ENCODE measurements at regions of chr17 and their contacts with region 1.

Region 1: DNA sequence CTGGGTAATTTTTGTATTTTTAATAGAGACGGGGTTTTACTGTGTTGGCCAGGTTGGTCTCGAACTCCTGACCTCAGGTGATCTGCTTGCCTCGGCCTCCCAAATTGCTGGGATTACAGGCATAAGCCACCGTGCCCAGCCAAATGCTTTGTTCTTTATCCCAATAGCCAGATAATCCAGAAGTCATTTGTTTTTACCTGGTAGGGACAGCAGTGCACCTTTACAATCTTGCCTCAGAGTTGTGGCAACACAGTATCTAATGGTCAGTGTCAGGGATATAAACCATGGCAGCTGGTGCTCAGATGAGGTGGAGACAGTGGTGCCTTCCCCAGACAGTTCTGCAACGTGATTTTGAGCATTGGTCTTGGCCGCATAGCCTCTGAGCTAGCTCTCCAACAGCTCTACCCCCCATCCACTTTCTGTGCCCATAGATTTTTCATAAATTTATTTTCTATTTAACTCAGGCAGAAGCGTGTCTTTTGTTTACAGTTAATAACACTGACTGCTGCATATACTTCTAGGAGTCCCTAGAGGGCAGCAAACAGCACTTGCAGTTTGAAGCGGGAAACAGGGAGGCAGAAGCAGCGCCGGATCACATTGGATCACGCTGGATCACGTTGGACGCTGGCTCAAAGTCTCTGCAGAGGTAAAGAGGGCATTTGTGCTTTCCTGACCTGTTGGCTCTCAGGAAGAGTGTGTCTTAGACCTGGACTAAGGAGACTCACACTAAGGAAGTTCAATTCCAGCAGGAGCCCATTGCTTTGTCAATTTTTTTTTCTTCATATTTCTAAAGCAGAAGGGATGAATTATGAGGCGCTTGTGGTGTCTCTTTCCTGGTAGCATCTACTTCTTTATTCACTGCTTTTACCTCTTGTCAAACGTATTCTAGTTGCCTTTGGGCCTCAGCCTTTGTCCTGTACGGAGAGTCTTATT is 5.1 kb upstream of the GGT6 start:
- DNase-seq: peak; percentile 78
- ATAC-seq: peak; percentile 69
- H3K4me3 Mint-ChIP-seq: no peak overlapping the region
- H3K27ac Mint-ChIP-seq: no peak overlapping the region
- H3K4me1 Mint-ChIP-seq: peaks cover 38% of the 10 kb centered on the region
- H3K27me3 Mint-ChIP-seq: peaks cover 2% of the 10 kb centered on the region

Region 2: GRCh38 chr17:4554997-4555799 is 10.3 kb before region 1 on chr17 and contains the start of gene MYBBP1A:
- CTCF ChIA-PET with region 1: interaction called, 11 read pairs
- POLR2A ChIA-PET with region 1: interaction called, 5 read pairs
- intact Hi-C with region 1: loop called (anchors 1 kb)
- DNase-seq: peak; percentile 99
- ATAC-seq: peak; percentile 97
- H3K4me3 Mint-ChIP-seq: peak within 1 kb of the TSS; percentile 93
- H3K27ac Mint-ChIP-seq: peak within 1 kb of the TSS; percentile 96
- H3K4me1 Mint-ChIP-seq: peaks cover 21% of the 10 kb centered on the region
- H3K27me3 Mint-ChIP-seq: no peaks in the 10 kb centered on the region
- total RNA-seq, gene MYBBP1A: 97.7 to 144 TPM

Region 3: DNA sequence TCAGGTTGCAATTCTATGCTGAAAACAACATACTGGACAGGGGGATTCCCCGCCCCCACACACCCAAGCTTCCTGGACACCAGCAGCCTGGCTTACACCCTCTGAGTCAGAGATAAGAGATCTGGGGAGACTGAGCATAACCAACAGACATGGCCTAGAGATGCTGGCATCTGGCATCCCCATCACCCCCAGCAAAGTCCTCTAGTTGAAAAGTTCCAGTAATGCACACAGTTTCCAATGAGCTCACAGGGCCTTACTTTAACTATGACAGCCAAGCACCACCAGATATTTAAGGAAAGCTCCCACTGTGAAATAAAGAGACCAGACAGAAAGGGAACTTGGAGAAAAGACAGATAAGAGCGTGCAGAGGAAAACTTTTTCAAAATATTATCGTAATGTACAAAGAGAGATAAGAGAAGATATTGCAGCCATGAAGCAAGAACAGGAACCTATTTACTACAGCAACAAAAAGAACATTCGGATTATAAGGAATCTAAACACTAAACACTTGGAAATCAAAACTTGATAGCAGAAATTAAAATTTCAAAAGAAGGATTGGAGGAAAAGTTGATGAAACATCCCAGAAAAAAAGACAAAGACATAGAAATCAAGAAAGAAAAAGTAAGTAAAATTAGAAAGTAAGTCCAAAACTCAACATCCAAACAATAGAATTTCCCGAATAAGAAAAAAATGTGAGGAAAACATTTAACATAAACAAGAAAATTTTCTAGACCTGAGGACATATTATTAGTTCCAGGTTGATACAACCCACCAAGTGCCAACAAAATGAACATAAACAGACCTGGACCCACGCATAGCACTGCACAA is 93.2 kb after region 1 on chr17:
- CTCF ChIA-PET with region 1: interaction called, 3 read pairs
- POLR2A ChIA-PET with region 1: no interaction called
- intact Hi-C with region 1: loop called in 1 of 2 experiments (anchors 1 kb)
- DNase-seq: peak; percentile 87
- ATAC-seq: peak; percentile 99
- H3K4me3 Mint-ChIP-seq: no peak overlapping the region
- H3K27ac Mint-ChIP-seq: peak overlapping the region; percentile 1
- H3K4me1 Mint-ChIP-seq: peaks cover 12% of the 10 kb centered on the region
- H3K27me3 Mint-ChIP-seq: peaks cover 13% of the 10 kb centered on the region

Region 4: DNA sequence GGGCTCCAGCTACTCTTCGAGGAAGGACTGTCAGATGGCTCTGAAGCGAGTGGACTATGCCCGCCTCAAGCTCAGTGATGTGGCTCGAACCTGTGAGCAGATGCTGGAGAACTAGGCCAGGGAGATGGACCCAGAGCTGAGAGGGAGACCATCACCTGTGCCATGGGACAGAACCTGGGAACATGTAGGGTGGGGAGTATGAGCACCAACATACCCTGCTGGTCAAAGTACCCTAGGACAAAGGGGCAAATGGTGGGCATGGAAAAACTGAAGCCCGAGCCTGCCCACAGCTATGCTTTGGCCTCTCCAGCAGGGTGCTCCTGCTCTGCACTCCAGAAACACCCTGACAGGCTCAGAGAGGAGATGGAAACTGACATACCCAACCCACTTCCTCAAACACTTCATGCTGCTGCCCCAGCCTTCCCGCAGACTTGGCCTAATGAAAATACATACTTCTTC is 167.6 kb after region 1 on chr17:
- CTCF ChIA-PET with region 1: interaction called, 5 read pairs
- POLR2A ChIA-PET with region 1: no interaction called
- intact Hi-C with region 1: loop called in 1 of 2 experiments (anchors 1 kb)
- DNase-seq: no peak
- ATAC-seq: no peak
- H3K4me3 Mint-ChIP-seq: no peak overlapping the region
- H3K27ac Mint-ChIP-seq: peak overlapping the region; percentile 17
- H3K4me1 Mint-ChIP-seq: peaks cover 39% of the 10 kb centered on the region
- H3K27me3 Mint-ChIP-seq: peaks cover under 1% of the 10 kb centered on the region

Region 5: DNA sequence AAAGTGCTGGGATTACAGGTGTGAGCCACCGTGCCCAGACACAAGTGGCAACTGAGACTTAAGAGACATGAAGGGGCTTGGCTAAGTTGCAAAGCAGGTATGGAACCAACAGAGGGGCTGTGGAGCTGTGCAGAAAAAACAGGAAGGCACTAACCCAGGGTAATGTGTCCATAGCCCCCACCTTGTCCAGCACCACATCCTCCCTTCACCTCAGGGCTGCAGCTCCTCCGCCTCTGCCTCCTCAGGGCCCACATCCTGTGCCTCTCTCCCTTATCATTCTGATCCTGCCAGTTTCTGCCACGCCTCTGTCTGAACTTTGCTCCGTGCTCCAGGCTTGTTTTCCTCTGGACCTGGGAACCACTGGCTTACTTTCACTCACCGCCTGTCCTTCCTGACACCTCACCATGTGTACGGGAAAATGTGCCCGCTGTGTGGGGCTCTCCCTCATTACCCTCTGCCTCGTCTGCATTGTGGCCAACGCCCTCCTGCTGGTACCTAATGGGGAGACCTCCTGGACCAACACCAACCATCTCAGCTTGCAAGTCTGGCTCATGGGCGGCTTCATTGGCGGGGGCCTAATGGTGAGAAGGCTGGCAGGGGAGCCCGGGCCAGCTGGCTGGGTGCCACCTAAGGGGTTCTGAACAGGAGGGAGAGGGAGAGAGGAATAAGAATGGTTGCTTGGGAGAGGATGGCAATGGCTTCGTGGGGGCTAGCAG is 206.2 kb after region 1 on chr17 and contains the start of gene TM4SF5:
- CTCF ChIA-PET with region 1: no interaction called
- POLR2A ChIA-PET with region 1: no interaction called
- intact Hi-C with region 1: no loop called
- DNase-seq: peak; percentile 17
- ATAC-seq: peak; percentile 60
- H3K4me3 Mint-ChIP-seq: no peak within 1 kb of the TSS
- H3K27ac Mint-ChIP-seq: no peak within 1 kb of the TSS
- H3K4me1 Mint-ChIP-seq: peaks cover 13% of the 10 kb centered on the region
- H3K27me3 Mint-ChIP-seq: peaks cover 7% of the 10 kb centered on the region
- total RNA-seq, gene TM4SF5: not detected

Region 6: GRCh38 chr17:4806777-4807604 is 241.5 kb after region 1 on chr17 and contains the start of gene PLD2:
- CTCF ChIA-PET with region 1: no interaction called
- POLR2A ChIA-PET with region 1: no interaction called
- intact Hi-C with region 1: loop called in 1 of 2 experiments (anchors 10 kb)
- DNase-seq: peak; percentile 93
- ATAC-seq: peak; percentile 98
- H3K4me3 Mint-ChIP-seq: peak within 1 kb of the TSS; percentile 73
- H3K27ac Mint-ChIP-seq: no peak within 1 kb of the TSS
- H3K4me1 Mint-ChIP-seq: peaks cover 7% of the 10 kb centered on the region
- H3K27me3 Mint-ChIP-seq: no peaks in the 10 kb centered on the region
- total RNA-seq, gene PLD2: 12.3 to 14.1 TPM

Region 7: GRCh38 chr17:4891411-4892342 is 326.2 kb after region 1 on chr17:
- CTCF ChIA-PET with region 1: no interaction called
- POLR2A ChIA-PET with region 1: no interaction called
- intact Hi-C with region 1: loop called (anchors 1 to 5 kb)
- DNase-seq: no peak
- ATAC-seq: no peak
- H3K4me3 Mint-ChIP-seq: no peak overlapping the region
- H3K27ac Mint-ChIP-seq: no peak overlapping the region
- H3K4me1 Mint-ChIP-seq: no peaks in the 10 kb centered on the region
- H3K27me3 Mint-ChIP-seq: no peaks in the 10 kb centered on the region

Measured in activated CD4-positive, alpha-beta T cell treated with anti-CD3 and anti-CD28 coated beads for 36 hours (primary cell).